ENCODE measurements at regions of chr19 and their contacts with region 1.

Region 1: GRCh38 chr19:14147797-14148605 is 11.6 kb upstream of the ASF1B start:
- DNase-seq: peak; percentile 83
- ATAC-seq: peak; percentile 83

Region 2: DNA sequence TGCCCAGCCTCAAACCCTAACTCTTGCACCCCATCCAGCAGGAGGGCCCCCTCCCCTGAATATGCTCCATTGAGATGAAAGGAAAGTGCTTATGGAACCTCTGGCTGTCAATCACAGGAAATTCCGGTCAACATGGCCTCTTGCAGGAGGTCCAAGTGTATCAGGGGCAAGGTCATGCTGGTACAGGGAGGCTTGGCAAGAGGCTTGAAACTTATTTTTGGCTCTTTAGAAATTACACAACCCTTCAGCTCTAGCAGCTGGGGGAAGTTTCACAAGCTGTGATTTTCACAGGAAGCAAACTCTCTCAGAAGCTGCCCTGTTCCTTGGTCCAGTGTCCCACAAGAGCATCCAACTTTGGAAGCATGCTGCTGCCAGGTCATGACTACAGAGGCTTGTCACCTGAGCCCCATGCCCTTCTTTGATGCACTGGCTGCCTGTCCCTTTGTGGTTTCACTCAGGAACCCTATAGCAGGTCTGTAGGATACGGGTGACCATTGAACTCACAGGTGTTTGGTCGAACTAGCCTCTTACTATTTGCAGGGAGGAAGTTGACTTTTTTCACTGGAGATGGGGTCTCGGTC is 20.0 kb before region 1 on chr19:
- intact Hi-C with region 1: no loop called
- DNase-seq: peak; percentile 67
- ATAC-seq: peak; percentile 92

Region 3: GRCh38 chr19:14347999-14348889 is 200.2 kb after region 1 on chr19:
- intact Hi-C with region 1: loop called (anchors 5 kb)
- DNase-seq: peak; percentile 86
- ATAC-seq: peak; percentile 86

Region 4: DNA sequence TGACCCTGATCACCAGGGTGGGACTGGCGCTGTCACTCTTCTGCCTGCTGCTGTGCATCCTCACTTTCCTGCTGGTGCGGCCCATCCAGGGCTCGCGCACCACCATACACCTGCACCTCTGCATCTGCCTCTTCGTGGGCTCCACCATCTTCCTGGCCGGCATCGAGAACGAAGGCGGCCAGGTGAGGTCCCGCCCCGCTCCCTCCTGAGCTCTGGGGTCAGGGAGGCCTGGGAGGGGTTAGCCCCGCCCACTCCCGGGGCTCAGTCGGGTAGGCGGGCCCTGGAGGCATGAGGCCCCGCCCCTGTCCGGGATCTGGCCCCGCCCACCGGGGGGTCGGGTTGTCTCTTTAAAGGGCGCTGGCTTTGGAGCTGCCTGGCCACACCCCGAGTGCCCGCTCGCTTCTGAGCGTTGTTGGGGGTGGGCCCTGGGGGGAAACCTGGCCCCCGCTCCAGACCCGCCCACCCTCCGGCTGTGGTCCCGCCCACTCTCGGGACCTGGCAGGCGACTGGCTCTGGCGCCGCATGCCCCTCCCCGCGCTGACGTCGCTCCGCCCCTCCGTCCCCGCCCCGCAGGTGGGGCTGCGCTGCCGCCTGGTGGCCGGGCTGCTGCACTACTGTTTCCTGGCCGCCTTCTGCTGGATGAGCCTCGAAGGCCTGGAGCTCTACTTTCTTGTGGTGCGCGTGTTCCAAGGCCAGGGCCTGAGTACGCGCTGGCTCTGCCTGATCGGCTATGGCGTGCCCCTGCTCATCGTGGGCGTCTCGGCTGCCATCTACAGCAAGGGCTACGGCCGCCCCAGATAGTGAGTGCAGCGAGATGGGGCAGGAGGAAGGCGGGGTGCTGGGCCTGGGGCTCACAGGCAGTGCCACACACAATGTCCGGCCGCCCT is 258.0 kb after region 1 on chr19:
- intact Hi-C with region 1: loop called (anchors 5 kb)
- DNase-seq: peak; percentile 93
- ATAC-seq: peak; percentile 87

Region 5: GRCh38 chr19:14472202-14472938 is 324.4 kb after region 1 on chr19:
- intact Hi-C with region 1: loop called (anchors 10 kb)
- DNase-seq: peak; percentile 87
- ATAC-seq: peak; percentile 59